Dorsolateral prefrontal cortex (tissue), 120 donors: ENCODE measurements at regions of chr14 and their contacts with region 1.

Region 1: DNA sequence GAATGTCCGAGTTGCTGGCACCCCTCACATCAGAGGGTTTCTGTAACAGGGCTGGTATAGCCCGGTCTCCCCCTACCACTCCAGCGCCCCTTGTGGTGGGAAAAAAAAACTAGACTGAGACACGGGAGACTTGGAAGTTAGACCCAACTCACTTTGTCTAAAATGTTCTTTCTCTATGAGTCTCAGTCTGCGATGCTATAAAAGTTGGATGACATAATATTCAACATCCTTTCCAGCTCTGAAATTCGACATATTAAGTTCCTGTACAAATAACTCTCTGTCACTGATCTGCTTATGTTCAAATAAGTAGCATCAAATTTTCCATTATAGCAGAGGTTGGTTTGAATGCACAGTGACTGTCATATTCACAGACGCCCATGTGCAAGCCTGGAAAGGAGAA is 25.7 kb upstream of the TC2N start:
- DNase-seq: no peak
- H3K4me3 ChIP-seq: no peak overlapping the region
- H3K27ac ChIP-seq: peak overlapping the region in 53 of 59 donors; percentile 38 to 97 (median 93)
- H3K27me3 ChIP-seq: no peaks in the 10 kb centered on the region
- CTCF ChIP-seq: peak in 54 of 56 donors; percentile 19 to 60 (median 40)

Region 2: DNA sequence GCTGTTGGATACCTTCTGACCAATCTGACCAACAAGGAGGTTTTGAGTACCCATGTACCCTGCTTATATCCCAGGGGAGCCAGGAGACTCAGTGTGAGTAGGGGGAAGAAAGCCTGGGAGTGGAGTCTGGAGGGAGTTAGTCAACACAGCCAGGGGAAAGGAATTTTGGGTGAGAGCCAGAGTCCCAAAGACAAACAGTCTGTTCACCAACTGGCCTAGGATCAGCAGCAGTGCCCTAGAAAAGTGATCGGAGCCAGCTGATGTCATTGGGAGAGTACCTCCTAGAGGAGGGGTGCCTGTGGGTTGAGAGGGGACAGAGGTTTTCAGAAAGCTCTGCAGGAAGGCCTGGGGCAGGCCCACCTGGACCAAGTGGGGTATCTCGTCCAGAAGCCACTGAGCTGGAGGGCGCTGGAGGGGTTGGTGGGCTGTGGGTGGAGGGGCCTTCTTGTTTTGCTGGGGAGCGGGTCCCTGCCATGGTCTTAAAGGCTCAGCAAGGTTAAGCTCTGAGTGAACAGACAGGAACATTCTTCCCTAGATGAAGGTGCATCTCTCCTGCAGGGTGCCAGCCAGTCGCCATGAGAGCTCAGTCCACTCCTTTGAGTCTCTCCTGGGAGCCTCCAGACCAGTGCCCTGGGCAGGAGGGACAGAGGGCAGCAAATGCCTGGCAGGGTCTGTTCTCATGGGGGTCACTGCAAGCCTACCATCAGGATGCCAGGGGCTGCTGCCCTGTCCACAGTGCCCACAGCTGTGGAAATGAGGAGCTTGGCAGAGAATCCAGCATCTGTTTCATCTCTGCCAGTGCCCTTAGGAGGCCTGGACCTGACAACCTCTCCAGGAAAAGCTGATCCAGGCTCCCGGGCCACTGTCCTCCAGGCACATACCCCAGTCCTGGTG is 1093.5 kb after region 1 on chr14:
- intact Hi-C with region 1: loop called in 1 of 2 experiments (anchors 10 kb)
- DNase-seq: peak in 3 of 10 donors; percentile 23 to 41 (median 32)
- H3K4me3 ChIP-seq: no peak overlapping the region
- H3K27ac ChIP-seq: peak overlapping the region in 47 of 59 donors; percentile 1 to 79 (median 52)
- H3K27me3 ChIP-seq: no peaks in the 10 kb centered on the region
- CTCF ChIP-seq: no peak